Prostate gland (tissue), 2 donors: ENCODE measurements at regions of chr2 and their contacts with region 1.

Region 1: GRCh38 chr2:46364797-46365457 is 67.7 kb downstream of the EPAS1 start:
- DNase-seq: peak; percentile 29
- H3K4me3 ChIP-seq: no peak overlapping the region
- H3K27ac ChIP-seq: no peak overlapping the region
- H3K4me1 ChIP-seq: peaks cover 4% of the 10 kb centered on the region
- H3K27me3 ChIP-seq: no peaks in the 10 kb centered on the region
- CTCF ChIP-seq: peak; percentile 49 to 76 (median 70)
- POLR2A ChIP-seq: no peak

Region 2: DNA sequence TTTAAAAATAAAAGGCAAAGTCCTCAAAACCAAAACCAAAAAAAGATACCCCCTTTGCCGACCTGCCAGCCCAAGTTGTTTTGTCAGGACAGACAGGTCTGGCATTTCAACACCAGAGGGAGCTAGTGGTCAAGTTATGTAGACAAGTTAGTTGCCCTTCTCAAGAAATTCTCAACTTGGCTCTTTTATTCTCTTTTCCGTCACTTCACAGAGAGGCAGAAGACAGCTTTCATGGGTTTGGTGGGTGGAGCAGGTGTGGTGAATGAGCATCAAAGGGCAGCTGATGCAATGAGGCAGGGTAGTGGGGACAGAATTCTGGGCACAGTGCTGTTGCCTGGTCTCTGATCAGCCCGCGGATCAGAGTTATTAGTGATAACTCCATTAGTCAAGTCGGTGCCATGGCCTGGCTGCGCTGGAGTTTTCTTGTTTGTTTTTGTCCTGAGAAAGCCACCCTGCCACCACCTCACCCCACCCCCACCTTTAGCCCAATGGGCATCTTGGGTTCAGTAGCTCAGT is 371.4 kb before region 1 on chr2:
- intact Hi-C with region 1: loop called (anchors 5 kb)
- DNase-seq: peak; percentile 75
- H3K4me3 ChIP-seq: no peak overlapping the region
- H3K27ac ChIP-seq: no peak overlapping the region
- H3K4me1 ChIP-seq: peaks cover 10% of the 10 kb centered on the region
- H3K27me3 ChIP-seq: no peaks in the 10 kb centered on the region
- CTCF ChIP-seq: peak; percentile 52 to 80 (median 78)
- POLR2A ChIP-seq: no peak

Region 3: DNA sequence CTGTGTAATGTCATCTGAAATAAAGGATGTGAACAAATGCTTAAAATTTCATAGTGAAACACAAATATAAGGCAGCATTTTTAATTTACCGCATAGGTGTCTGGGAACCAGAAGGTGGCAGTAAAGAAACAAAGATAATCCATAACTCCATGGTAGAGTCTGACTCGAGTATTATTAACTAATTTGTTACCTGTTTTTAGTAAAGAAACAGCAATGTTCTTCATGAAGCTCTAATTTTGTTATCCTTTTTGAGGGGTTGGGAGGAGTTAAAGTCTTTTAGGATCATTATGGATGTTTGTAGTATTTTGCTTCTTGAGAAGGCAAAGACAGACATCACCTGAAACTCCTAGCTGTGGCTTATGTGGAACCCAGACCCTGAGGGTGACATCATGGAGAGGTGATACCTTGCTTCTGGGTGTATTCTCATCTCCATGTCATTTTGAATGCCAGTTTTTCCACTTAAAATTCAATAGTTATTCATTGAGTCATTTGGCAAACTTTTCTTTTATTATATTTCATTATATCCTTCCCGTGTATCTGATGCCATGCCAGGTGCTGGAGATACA is 353.9 kb before region 1 on chr2:
- intact Hi-C with region 1: loop called (anchors 2 kb)
- DNase-seq: no peak
- H3K4me3 ChIP-seq: no peak overlapping the region
- H3K27ac ChIP-seq: no peak overlapping the region
- H3K4me1 ChIP-seq: no peaks in the 10 kb centered on the region
- H3K27me3 ChIP-seq: no peaks in the 10 kb centered on the region
- CTCF ChIP-seq: peak; percentile 53 to 91 (median 78)
- POLR2A ChIP-seq: no peak

Region 4: DNA sequence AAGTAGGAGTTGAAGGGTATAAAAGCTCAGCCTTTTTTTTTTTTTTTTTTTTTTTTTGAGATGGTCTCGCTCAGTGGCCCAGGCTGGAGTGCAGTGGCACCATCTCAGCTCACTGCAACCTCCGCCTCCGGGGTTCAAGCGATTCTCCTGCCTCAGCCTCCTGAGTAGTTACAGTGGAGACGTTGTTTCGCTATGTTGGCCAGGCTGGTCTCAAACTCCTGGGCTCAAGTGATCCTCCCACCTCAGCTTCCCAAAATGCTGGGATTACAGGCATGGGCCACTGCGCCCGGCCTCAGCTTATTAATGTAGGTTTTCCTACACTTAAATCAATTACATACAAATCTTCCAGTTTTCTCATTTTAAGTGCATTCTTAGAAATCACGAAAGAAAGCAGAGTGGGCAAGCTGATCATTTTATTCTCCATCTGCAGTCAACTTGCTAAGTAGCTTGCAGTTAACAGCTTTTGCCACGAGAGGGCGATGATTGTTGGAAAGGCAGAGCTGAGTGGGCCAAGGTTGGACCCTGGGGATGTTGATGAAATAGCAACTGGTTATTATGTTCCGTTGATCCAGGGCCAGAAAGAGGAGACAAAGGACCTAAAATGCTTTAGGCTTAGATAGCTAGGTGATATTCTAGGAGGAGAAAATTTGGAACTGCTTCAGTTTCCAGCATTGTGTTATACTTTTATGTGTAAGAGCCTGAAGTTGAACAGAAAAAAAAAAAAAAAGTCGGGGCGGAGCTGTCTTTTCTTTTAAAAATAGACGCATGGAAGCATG is 302.1 kb before region 1 on chr2:
- intact Hi-C with region 1: loop called (anchors 5 kb)
- DNase-seq: peak; percentile 73
- H3K4me3 ChIP-seq: no peak overlapping the region
- H3K27ac ChIP-seq: no peak overlapping the region
- H3K4me1 ChIP-seq: peaks cover 12% of the 10 kb centered on the region
- H3K27me3 ChIP-seq: no peaks in the 10 kb centered on the region
- CTCF ChIP-seq: peak; percentile 46 to 85 (median 76)
- POLR2A ChIP-seq: no peak

Region 5: GRCh38 chr2:46434851-46435273 is 69.9 kb after region 1 on chr2:
- intact Hi-C with region 1: no loop called
- DNase-seq: no peak
- H3K4me3 ChIP-seq: no peak overlapping the region
- H3K27ac ChIP-seq: no peak overlapping the region
- H3K4me1 ChIP-seq: no peaks in the 10 kb centered on the region
- H3K27me3 ChIP-seq: no peaks in the 10 kb centered on the region
- CTCF ChIP-seq: no peak
- POLR2A ChIP-seq: no peak